OCI-LY7 (cell line): ENCODE measurements at regions of chr16 and their contacts with region 1.

Region 1: DNA sequence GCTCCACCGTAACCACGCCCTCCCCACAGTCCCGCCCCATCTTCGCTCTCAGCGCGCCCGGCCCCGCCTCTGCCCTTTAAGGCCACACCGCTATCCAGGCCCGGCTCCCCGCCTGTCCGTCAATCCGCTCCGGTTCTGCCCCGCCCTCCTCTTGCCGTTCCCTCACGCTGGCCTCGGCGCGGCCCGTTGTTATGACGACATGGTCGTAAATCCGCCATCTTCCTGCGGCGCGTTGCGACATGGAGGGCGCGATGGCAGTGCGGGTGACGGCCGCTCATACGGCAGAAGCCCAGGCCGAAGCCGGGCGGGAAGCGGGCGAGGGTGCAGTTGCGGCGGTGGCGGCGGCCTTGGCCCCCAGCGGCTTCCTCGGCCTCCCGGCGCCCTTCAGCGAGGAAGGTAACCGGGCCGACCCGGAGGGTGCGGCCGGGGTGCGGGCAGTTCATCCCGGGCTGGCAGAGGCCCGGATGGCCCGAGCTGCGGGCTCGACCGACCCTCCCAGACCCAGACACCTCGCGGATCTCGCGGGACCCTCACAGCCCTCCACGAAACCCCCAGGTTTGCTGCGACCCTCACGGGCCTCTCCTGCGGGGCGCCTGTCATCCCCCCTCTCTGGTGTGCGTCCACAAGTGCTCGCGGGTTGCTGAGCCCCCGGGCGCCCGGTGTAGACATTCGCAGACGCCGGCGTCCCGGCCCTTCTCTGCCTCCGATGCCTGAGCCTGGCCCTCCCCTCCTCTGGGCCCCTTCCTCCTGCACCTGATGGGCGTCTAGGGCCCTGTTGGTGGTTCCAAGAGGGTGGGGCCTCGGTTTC is at the start of gene E4F1:
- DNase-seq: peak; percentile 99
- H3K4me3 ChIP-seq: peak within 1 kb of the TSS; percentile 94
- H3K27ac ChIP-seq: peak within 1 kb of the TSS; percentile 65
- H3K4me1 ChIP-seq: peaks cover 10% of the 10 kb centered on the region
- CTCF ChIP-seq: no peak; the same call in 1 of the 2 replicates
- total RNA-seq, gene E4F1: 43.1 and 59.6 TPM in 2 replicates

Region 2: GRCh38 chr16:1812732-1813163 is 410.8 kb before region 1 on chr16:
- CTCF ChIA-PET with region 1: no interaction called
- POLR2A ChIA-PET with region 1: no interaction called
- intact Hi-C with region 1: no loop called
- DNase-seq: peak; percentile 35
- H3K4me3 ChIP-seq: no peak overlapping the region
- H3K27ac ChIP-seq: no peak overlapping the region
- H3K4me1 ChIP-seq: no peaks in the 10 kb centered on the region
- CTCF ChIP-seq: peak; percentile 69

Region 3: DNA sequence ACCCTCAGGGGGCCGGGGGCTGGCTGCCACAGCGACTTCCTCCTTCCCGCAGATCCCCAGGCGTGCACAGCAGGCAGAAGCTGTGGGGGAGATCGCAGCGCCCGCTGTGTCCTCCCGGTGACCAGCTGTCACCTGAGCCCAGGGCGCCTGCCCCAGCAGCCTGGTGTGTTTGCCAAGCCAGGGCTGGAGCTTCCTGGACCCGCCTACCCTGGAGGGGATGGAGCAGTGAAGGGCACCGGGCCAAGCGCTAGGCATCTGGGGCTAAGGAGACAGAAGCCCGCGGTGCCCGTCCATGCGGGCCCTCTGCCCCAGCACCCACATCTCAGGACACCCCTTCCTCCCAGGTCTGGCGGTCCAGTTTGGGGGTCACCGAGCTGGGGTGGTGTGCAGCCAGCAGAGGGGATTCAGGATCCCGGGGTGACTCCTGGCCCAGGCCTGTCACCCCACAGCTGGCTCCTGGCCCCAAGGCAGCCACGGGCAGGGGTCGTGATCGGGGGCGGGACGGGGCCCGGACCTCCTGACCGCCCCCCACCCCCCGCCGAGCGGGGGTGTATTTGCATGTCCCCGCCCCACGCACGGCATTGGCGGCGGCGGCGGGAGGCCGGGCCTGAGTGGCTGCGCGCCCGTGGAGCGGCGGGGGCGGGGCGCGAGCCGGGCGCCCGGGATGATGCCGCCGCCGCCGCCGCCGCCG is 75.5 kb before region 1 on chr16 and contains the start of gene RAB26:
- CTCF ChIA-PET with region 1: no interaction called
- POLR2A ChIA-PET with region 1: no interaction called
- intact Hi-C with region 1: loop called (anchors 5 kb)
- DNase-seq: peak; percentile 70
- H3K4me3 ChIP-seq: peak within 1 kb of the TSS; percentile 81
- H3K27ac ChIP-seq: peak within 1 kb of the TSS; percentile 83
- H3K4me1 ChIP-seq: peaks cover 52% of the 10 kb centered on the region
- CTCF ChIP-seq: no peak
- total RNA-seq, gene RAB26: 3.1 and 5.0 TPM in 2 replicates

Region 4: DNA sequence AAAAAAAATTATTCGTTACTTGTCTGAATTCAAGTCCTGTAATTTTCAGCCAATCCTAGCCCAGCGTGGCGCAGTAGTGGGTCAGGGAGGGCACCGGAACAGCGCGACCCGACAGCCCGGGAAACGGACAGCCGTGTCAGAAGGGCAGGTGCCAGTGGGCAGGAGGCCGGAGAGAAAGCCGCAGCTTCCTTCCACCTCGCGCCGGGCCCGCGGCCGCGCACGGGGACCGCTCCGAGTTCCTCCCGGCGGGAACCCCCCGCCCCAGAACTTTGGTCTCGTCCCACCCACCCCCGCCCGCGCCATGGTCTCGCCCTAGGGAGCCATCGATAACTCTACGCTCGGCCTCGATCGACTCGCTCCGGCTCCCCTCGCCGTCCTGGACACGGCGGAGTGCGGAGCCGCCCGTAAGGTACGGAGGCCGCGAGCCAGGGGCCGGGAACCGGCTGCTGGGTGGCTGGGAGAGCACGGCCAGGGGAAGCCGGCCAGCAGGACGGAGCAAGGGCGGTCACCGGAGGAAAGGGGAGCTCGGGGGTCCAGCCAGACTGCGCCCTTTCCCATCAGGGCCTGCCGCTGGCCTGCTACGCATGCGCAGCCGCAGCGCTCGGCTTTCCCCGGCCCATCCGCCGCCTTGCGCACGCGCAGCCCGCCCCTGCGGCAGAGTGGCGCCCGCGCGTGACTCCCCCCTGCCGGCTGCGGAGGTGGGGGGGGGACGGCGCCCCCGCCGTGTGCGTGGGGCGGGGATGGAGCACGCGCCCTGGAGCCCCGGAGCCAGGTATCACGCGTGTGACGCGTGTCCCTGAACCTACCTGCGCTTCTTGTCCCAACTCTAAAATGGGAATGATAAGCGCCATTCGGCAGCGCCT is 18.2 kb before region 1 on chr16 and contains the start of gene MLST8:
- CTCF ChIA-PET with region 1: no interaction called
- POLR2A ChIA-PET with region 1: no interaction called
- intact Hi-C with region 1: loop called (anchors 1 kb)
- DNase-seq: peak; percentile 92
- H3K4me3 ChIP-seq: peak within 1 kb of the TSS; percentile 79
- H3K27ac ChIP-seq: peak within 1 kb of the TSS; percentile 64
- H3K4me1 ChIP-seq: peaks cover 13% of the 10 kb centered on the region
- CTCF ChIP-seq: peak; percentile 29; the same call in 1 of the 2 replicates
- total RNA-seq, gene MLST8: 57.1 and 65.4 TPM in 2 replicates

Region 5: DNA sequence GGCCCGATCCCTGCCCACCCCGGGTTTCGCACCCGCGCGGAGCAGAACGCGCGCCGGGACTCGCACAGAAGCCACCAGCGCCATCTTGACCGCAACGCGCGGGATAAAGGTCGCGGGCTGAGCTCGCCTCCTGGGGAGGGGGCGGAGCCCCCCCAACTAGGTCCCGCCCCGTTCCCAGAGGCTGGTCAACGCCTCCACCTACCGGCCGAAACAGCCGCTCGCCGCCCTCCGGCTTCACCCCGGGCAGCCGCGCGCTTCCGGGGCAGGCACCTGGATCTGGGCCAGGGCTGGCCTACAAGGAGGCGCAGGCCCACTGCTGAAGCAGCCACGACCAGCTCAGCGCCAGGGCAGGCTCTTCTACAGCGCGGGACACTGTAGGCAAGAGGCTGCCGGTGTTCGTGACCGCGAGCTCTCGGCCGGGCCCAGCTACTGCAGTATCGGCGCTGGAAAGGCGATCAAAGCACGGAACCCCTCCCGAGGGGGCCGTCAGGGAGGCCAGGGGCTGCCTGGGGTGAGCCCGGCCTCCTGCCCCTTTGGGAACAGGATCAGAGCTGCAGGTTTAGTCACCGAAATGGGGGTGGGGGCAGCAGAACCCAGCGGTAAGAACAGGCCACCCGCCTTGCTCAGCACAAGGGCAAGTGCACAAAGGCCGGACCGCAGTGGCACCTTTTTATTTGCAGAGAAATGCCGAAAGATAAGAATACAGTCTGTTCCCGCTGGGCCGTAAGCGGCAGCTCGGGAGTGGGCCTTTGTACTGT is 28.1 kb after region 1 on chr16 and contains the start of gene ECI1:
- CTCF ChIA-PET with region 1: no interaction called
- POLR2A ChIA-PET with region 1: no interaction called
- intact Hi-C with region 1: loop called (anchors 1 kb)
- DNase-seq: peak; percentile 95
- H3K4me3 ChIP-seq: peak within 1 kb of the TSS; percentile 76
- H3K27ac ChIP-seq: peak within 1 kb of the TSS; percentile 68
- H3K4me1 ChIP-seq: peaks cover 17% of the 10 kb centered on the region
- CTCF ChIP-seq: peak; percentile 73
- total RNA-seq, gene ECI1: 66.6 and 80.0 TPM in 2 replicates